H1 (cell line): ENCODE measurements at regions of chr1 and their contacts with region 1.

Region 1: DNA sequence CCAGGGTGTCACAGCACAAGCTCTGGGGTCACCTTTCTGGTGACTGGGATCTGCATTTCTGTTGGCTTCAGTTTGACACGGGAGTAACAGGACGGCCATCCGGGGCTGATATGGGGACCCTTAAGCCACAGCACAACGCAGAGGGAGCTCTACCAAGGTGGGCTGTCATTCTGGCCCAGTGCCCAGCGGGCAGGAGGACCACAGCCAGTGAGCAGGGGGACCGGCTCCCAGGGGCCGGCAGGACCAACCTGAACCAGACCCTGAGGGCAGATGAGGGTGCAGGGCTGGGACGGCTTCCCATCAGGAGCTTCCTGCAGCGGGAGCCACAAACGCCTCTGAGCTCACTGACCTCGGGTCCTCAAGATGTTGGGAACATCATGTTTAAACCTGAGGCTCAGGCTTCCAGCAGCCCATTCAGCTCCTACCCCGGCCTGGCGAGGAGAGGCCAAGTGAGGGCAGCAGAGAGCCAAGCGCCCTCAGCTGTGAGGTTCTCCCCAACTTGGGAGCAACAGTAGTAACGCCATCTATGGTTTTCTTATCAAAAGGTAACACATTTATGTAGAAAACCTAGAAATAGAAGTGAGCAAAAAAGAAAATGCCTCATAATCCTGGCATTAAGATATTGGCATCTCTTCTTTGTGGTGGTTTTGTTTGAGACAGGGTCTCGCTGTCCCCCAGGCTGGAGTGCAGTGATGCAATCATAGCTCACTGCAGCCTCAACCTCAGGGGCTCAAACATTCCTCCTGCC is 26.8 kb downstream of the TMEM201 start:
- DNase-seq: peak; percentile 59 to 86
- H3K4me3 ChIP-seq: no peak overlapping the region
- H3K27ac ChIP-seq: no peak overlapping the region
- H3K4me1 ChIP-seq: no peaks in the 10 kb centered on the region; a peak in 1 of 7 replicates
- H3K27me3 ChIP-seq: no peaks in the 10 kb centered on the region
- CTCF ChIP-seq: peak; percentile 94 to 96 (median 95)
- EP300 ChIP-seq: no peak
- POLR2A ChIP-seq: no peak
- RAD21 ChIP-seq: peak; percentile 68 to 72

Region 2: GRCh38 chr1:9166289-9167235 is 448.9 kb before region 1 on chr1:
- CTCF ChIA-PET with region 1: no interaction called
- POLR2A ChIA-PET with region 1: no interaction called
- DNase-seq: no peak
- H3K4me3 ChIP-seq: 0 out of 8 replicates have a peak overlapping the region, but pooled peaks of 1 of the 4 experiments have one; percentile 5
- H3K27ac ChIP-seq: no peak overlapping the region
- H3K4me1 ChIP-seq: peaks cover 0 to 26% (median 7%) of the 10 kb centered on the region in 4 experiments; a peak in 6 of 7 replicates
- H3K27me3 ChIP-seq: no peaks in the 10 kb centered on the region
- CTCF ChIP-seq: no peak
- EP300 ChIP-seq: no peak
- POLR2A ChIP-seq: no peak
- RAD21 ChIP-seq: no peak

Region 3: DNA sequence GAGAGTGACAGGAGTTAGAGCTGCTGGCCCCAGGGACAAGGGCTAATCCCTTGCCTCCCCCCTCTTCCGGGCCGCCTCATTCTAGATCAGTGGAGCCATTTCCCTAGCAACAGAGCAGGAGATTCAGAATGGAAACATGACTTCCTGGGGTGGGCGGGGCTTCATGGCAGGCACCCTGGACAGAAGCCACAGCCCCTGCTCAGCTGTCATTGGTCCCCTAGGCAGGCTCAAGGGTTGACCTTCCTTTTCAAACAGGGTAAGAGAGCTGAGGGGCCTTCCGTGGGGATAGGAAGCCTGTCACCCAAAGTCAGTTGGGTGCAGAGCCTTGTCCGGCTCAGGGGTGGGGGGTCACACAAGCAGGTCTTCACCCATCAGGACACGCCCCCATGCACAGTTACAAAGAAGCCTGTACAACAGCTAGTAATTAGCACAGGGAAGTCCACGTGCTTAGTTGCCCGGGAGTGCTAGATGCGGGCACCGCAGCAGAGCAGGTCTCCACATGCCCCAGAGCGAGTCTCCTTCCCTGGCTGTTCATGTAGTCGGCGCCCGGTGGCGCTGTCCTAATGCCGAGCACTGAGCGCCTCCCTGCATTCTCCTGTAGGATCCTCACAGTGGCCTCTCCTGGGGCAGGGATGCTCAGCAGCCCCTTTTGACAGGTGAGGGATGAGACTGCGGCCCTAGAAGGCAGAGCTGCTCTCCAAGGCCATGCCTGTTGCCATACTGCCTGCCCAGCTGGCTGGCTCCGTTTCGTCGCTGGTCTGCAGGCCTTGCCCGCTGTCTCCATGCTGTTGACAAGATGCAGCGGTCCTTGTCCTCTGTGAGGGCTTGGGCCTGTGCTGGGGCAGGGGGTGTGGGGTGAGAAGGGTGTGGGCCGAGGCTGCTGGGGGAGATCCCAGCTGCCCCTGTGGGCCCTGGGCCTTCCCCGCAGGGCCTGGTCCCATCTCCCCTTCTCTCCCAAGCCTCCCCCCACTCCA is 21.7 kb before region 1 on chr1:
- CTCF ChIA-PET with region 1: interaction called, 44 read pairs
- POLR2A ChIA-PET with region 1: interaction called, 5 read pairs
- DNase-seq: peak; percentile 23 to 71
- H3K4me3 ChIP-seq: no peak overlapping the region
- H3K27ac ChIP-seq: 0 out of 2 replicates have a peak overlapping the region, but pooled peaks have one; percentile 39
- H3K4me1 ChIP-seq: peaks cover 0 to 40% (median 28%) of the 10 kb centered on the region in 4 experiments; a peak in 5 of 7 replicates
- H3K27me3 ChIP-seq: no peaks in the 10 kb centered on the region
- CTCF ChIP-seq: peak in 2 of 3 experiments; percentile 36 to 52; a peak in 3 of 4 replicates
- EP300 ChIP-seq: no peak
- POLR2A ChIP-seq: no peak
- RAD21 ChIP-seq: peak in 1 of 2 experiments; percentile 14; a peak in 1 of 4 replicates

Region 4: GRCh38 chr1:9659328-9659998 is 44.0 kb after region 1 on chr1:
- CTCF ChIA-PET with region 1: interaction called, 10 read pairs
- POLR2A ChIA-PET with region 1: no interaction called
- DNase-seq: no peak
- H3K4me3 ChIP-seq: no peak overlapping the region
- H3K27ac ChIP-seq: no peak overlapping the region
- H3K4me1 ChIP-seq: no peaks in the 10 kb centered on the region; a peak in 1 of 7 replicates
- H3K27me3 ChIP-seq: no peaks in the 10 kb centered on the region
- CTCF ChIP-seq: no peak
- EP300 ChIP-seq: no peak
- POLR2A ChIP-seq: no peak
- RAD21 ChIP-seq: no peak

Region 5: GRCh38 chr1:9689011-9689706 is 73.7 kb after region 1 on chr1:
- CTCF ChIA-PET with region 1: interaction called, 14 read pairs
- POLR2A ChIA-PET with region 1: no interaction called
- DNase-seq: peak in 1 of 2 experiments; percentile 96
- H3K4me3 ChIP-seq: peak overlapping the region; percentile 46 to 81 (median 59)
- H3K27ac ChIP-seq: peak overlapping the region; percentile 53; the same call in 1 of the 2 replicates
- H3K4me1 ChIP-seq: peaks cover 7 to 24% (median 15%) of the 10 kb centered on the region in 4 experiments
- H3K27me3 ChIP-seq: peaks cover 0 to 13% (median 11%) of the 10 kb centered on the region in 4 experiments; a peak in 6 of 7 replicates
- CTCF ChIP-seq: no peak
- EP300 ChIP-seq: no peak
- POLR2A ChIP-seq: no peak; a peak in 1 of 3 replicates
- RAD21 ChIP-seq: no peak

Region 6: DNA sequence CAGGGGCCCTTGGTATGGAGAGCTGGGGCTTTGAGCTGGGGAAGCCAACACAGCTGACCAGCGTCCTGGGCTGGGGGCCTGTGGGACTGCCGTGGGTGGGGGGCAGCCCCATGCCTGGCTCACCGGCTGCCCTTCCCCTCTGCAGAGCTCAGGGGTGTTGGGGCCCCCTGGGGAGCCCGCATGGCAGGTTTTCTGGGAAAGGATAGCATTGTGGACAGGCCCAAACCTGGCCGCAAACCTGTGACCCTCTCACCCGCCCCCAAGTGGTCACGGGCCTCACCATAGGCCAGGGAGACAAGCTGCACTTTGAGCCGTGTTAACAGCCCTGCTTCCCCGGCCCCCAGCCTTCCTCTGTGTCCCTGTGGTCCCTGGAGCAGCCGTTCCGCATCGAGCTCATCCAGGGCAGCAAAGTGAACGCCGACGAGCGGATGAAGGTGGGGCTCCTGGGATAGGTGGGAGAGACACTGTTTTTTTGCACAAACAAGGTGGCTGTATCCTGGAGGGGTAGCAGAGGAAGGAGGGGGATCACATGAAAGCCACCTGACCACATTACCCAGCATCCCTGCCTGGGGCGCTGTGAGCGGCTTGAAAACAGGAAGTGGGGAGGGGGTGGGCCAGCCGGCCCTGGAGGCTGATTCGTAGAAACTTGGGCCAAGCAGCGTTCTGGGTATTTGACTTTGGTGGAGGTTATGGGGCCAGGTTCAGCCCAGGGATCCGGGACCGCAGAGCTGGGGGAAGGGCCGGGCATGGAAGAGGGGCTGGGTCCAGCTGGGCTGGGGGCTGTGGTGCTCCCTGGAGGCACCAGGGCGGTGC is 101.9 kb after region 1 on chr1:
- CTCF ChIA-PET with region 1: interaction called, 21 read pairs
- POLR2A ChIA-PET with region 1: no interaction called
- DNase-seq: no peak
- H3K4me3 ChIP-seq: no peak overlapping the region
- H3K27ac ChIP-seq: peak overlapping the region; percentile 49; the same call in 1 of the 2 replicates
- H3K4me1 ChIP-seq: peaks cover 4 to 50% (median 35%) of the 10 kb centered on the region in 4 experiments
- H3K27me3 ChIP-seq: no peaks in the 10 kb centered on the region
- CTCF ChIP-seq: peak in 2 of 3 experiments; percentile 33 to 42; a peak in 1 of 4 replicates
- EP300 ChIP-seq: no peak
- POLR2A ChIP-seq: no peak
- RAD21 ChIP-seq: peak in 1 of 2 experiments; percentile 34; a peak in 1 of 4 replicates